ENCODE measurements at regions of chr12 and their contacts with region 1.

Region 1: GRCh38 chr12:56206457-56207166 is 15.1 kb downstream of the RNF41 start:
- DNase-seq: no peak
- ATAC-seq: peak; percentile 47
- H3K4me3 Mint-ChIP-seq: no peak overlapping the region
- H3K27ac Mint-ChIP-seq: peak overlapping the region; percentile 80
- H3K4me1 Mint-ChIP-seq: peaks cover 39% of the 10 kb centered on the region
- H3K27me3 Mint-ChIP-seq: no peaks in the 10 kb centered on the region
- CTCF ChIP-seq: no peak

Region 2: DNA sequence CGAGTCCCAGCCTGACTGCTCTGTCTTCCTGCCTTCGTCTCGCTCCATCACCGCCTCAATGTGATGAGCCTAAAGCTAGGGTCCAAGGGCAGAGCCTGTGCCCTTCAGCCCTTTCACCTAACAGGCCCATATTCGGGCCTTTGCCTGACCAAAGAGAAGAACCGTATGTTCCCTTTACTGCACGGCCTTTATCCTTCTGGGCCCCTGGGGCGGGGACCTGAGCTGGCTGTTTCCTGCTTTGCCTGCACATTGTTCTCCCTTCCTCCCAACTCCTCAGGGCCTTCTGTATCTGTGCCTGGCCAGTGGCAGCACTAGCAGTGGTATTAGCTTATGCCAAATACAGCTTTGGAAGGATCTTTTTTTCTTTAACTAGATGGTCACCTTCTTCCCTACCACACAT is 62.7 kb before region 1 on chr12:
- CTCF ChIA-PET with region 1: no interaction called
- POLR2A ChIA-PET with region 1: no interaction called
- intact Hi-C with region 1: no loop called
- DNase-seq: no peak
- ATAC-seq: no peak
- H3K4me3 Mint-ChIP-seq: no peak overlapping the region
- H3K27ac Mint-ChIP-seq: peak overlapping the region; percentile 18
- H3K4me1 Mint-ChIP-seq: peaks cover 15% of the 10 kb centered on the region
- H3K27me3 Mint-ChIP-seq: no peaks in the 10 kb centered on the region
- CTCF ChIP-seq: no peak

Region 3: DNA sequence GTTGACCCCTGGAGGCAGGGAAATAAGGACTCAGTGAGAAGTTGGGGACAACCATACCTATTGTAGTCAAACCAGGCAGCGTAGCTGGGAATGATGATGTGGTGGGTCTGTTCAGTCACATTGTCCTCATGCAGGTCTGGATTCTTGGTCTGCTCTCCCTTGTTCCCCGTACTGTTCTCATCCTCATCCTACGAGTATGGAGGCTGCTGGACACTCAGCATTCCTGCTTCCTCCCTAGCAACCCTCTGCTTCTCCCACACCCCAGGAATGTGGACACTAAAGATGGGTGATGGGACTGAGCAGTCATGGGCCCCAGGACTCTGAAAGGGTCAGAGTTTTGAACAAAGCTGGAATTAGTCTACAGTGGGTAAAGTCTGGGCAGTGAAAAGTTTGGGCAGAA is 28.3 kb before region 1 on chr12:
- CTCF ChIA-PET with region 1: no interaction called
- POLR2A ChIA-PET with region 1: no interaction called
- intact Hi-C with region 1: no loop called
- DNase-seq: no peak
- ATAC-seq: no peak
- H3K4me3 Mint-ChIP-seq: no peak overlapping the region
- H3K27ac Mint-ChIP-seq: no peak overlapping the region
- H3K4me1 Mint-ChIP-seq: no peaks in the 10 kb centered on the region
- H3K27me3 Mint-ChIP-seq: no peaks in the 10 kb centered on the region
- CTCF ChIP-seq: no peak

Region 4: DNA sequence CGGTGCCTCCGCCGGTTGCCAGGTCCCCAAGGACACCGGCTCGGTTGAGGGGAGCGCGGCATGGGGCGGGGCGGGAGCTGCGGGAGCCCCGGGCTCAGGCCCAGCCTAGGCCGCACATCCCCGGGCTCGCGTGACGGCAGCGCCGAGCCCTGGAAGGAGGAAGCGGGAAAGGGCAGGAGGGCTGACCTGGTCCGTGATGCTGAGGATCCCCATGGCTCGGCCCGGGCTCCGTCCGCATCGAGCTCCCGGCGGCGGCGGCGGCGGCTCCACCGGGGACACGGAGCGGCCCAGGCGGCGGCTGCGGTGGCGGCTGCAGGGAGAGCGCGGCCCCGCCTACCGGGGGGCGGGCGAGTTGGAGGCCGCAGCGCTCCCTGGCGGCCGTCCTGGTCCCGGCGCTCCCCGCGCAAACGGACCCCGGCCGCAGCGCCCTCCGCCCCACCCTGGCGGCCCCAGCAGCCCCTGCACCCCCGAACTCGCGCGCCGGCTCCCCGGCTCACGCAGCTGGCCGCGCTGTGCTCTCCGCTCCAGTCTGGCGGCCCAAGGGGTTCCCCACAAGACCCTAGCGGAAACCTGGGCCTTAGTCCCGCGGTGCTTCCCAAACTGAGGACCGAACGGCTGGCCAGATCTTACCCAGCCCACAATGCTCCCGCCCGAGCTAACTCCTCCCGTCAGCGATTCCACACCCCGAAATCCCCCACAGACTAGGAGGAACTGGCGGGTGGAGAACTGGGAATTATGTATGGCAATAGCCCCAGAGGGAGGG is 51.6 kb after region 1 on chr12 and contains the start of gene ANKRD52:
- CTCF ChIA-PET with region 1: interaction called, 14 read pairs
- POLR2A ChIA-PET with region 1: no interaction called
- intact Hi-C with region 1: loop called (anchors 1 kb)
- DNase-seq: peak; percentile 89
- ATAC-seq: peak; percentile 94
- H3K4me3 Mint-ChIP-seq: peak within 1 kb of the TSS; percentile 91
- H3K27ac Mint-ChIP-seq: peak within 1 kb of the TSS; percentile 77
- H3K4me1 Mint-ChIP-seq: peaks cover 21% of the 10 kb centered on the region
- H3K27me3 Mint-ChIP-seq: no peaks in the 10 kb centered on the region
- CTCF ChIP-seq: peak; percentile 28
- total RNA-seq, gene ANKRD52: 44.1 and 44.8 TPM in 2 replicates

Measured in activated B cell treated with CpG ODN at 0.5 μM for 24 hours (primary cell).